CD4-positive, alpha-beta T cell (primary cell): ENCODE measurements at regions of chr1 and their contacts with region 1.

Region 1: DNA sequence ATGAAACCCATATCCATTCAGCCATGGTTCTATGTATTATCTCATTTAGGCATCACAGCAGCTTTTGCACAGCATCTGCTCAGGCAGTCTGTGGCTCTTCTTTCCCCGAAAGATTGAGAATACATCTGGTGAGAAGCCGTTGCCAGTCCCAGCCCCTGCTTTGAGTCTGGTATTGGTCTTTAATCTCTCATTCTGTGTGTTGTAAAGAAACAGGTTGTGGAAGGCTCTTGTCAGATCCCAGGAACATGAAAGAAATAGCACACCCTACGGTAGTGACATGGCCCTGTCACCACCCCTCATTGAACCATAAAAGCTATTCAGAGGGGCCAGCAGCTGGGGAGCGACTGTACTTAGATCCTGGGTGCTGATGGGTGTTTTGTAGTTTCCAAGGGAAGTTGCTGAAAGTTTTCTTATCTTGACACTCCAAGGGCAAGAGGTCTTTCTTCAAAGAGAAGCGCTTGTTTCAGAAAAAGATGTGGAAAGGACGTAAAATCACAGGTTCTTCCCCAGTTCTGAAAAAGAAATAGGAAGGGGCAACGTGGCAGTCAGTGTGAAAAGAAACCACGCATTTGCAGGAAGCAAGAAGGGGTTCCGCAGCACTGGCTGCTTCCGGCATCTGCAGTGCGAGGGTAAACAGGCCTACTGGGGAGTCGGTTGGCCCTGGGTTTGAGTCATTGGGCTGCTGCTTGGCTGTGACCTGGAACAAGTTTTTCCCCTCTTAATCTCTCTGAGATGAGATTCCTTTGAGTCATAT is 145.0 kb downstream of the DHRS3 start:
- DNase-seq: peak; percentile 25 to 84 (median 63)
- ATAC-seq: peak; percentile 75
- H3K4me3 ChIP-seq: peak overlapping the region; percentile 24
- H3K4me3 Mint-ChIP-seq: peak overlapping the region; percentile 55
- H3K27ac ChIP-seq: peak overlapping the region; percentile 59 to 81
- H3K27ac Mint-ChIP-seq: peak overlapping the region; percentile 88
- H3K4me1 ChIP-seq: peaks cover 47% of the 10 kb centered on the region
- H3K4me1 Mint-ChIP-seq: peaks cover 87% of the 10 kb centered on the region
- H3K27me3 ChIP-seq: no peaks in the 10 kb centered on the region
- H3K27me3 Mint-ChIP-seq: no peaks in the 10 kb centered on the region
- CTCF ChIP-seq: no peak

Region 2: GRCh38 chr1:12407050-12407961 is 65.7 kb before region 1 on chr1:
- CTCF ChIA-PET with region 1: no interaction called
- POLR2A ChIA-PET with region 1: interaction called, 3 read pairs
- intact Hi-C with region 1: loop called in 1 of 2 experiments (anchors 5 kb)
- DNase-seq: peak in 4 of 14 experiments; percentile 40 to 58 (median 57)
- ATAC-seq: peak; percentile 44
- H3K4me3 ChIP-seq: no peak overlapping the region
- H3K4me3 Mint-ChIP-seq: no peak overlapping the region
- H3K27ac ChIP-seq: no peak overlapping the region
- H3K27ac Mint-ChIP-seq: no peak overlapping the region
- H3K4me1 ChIP-seq: peaks cover 3% of the 10 kb centered on the region
- H3K4me1 Mint-ChIP-seq: peaks cover 40% of the 10 kb centered on the region
- H3K27me3 ChIP-seq: no peaks in the 10 kb centered on the region
- H3K27me3 Mint-ChIP-seq: no peaks in the 10 kb centered on the region
- CTCF ChIP-seq: peak; percentile 54

Region 3: DNA sequence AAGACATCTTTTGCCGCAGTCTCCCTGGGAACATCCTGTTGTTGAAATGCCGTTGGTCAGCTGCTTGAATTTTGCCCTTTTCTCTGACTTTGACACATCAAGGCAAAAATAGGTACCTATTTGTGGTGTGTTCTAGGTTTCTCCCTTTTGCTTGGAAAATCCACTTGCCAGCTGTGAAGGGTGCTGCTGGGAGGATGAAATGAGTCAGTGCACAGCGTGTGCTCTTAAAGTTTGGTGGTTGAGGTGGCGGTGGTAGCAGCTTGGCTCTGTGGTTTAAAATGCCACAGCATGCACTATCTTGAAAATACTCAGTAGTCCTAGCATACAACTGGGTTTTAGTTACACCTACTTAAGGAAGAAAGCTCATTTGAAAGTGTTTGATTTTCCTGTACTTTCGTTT is 38.8 kb before region 1 on chr1:
- CTCF ChIA-PET with region 1: interaction called, 3 read pairs
- POLR2A ChIA-PET with region 1: interaction called, 10 read pairs
- intact Hi-C with region 1: loop called in 1 of 2 experiments (anchors 2 kb)
- DNase-seq: peak in 12 of 14 experiments; percentile 11 to 82 (median 45)
- ATAC-seq: peak; percentile 78
- H3K4me3 ChIP-seq: no peak overlapping the region
- H3K4me3 Mint-ChIP-seq: peak overlapping the region; percentile 62
- H3K27ac ChIP-seq: peak overlapping the region; percentile 17 to 43
- H3K27ac Mint-ChIP-seq: peak overlapping the region; percentile 84
- H3K4me1 ChIP-seq: peaks cover 55% of the 10 kb centered on the region
- H3K4me1 Mint-ChIP-seq: peaks cover 61% of the 10 kb centered on the region
- H3K27me3 ChIP-seq: no peaks in the 10 kb centered on the region
- H3K27me3 Mint-ChIP-seq: no peaks in the 10 kb centered on the region
- CTCF ChIP-seq: no peak

Region 4: DNA sequence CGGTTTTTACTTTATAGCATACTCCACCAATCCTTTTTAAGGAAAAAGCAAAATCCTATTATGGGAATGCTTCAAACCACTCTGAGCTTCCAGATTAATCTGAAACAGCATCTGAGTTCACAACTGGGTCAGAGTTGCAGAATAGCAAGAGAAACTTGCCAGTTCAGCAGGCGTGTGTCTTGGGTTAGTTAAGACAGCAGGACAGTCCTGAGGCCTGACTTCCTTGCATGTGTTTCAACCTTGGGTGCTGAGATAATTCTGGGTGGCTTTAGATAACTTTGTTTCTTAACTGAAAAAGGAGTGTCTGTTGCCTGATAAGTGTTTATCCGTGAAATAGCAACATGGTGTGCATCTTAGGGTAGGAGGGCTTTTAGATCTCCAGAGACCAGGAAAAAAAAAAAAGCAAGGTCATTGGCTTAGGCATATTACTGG is 24.2 kb before region 1 on chr1:
- CTCF ChIA-PET with region 1: no interaction called
- POLR2A ChIA-PET with region 1: interaction called, 10 read pairs
- intact Hi-C with region 1: loop called in 1 of 2 experiments (anchors 2 kb)
- DNase-seq: peak in 1 of 14 experiments; percentile 13
- ATAC-seq: no peak
- H3K4me3 ChIP-seq: peak overlapping the region; percentile 19
- H3K4me3 Mint-ChIP-seq: no peak overlapping the region
- H3K27ac ChIP-seq: peak overlapping the region; percentile 33 to 64
- H3K27ac Mint-ChIP-seq: peak overlapping the region; percentile 85
- H3K4me1 ChIP-seq: peaks cover 59% of the 10 kb centered on the region
- H3K4me1 Mint-ChIP-seq: peaks cover 89% of the 10 kb centered on the region
- H3K27me3 ChIP-seq: no peaks in the 10 kb centered on the region
- H3K27me3 Mint-ChIP-seq: no peaks in the 10 kb centered on the region
- CTCF ChIP-seq: no peak

Region 5: GRCh38 chr1:12454406-12455391 is 18.3 kb before region 1 on chr1:
- CTCF ChIA-PET with region 1: interaction called, 3 read pairs
- POLR2A ChIA-PET with region 1: interaction called, 15 read pairs
- intact Hi-C with region 1: loop called (anchors 2 kb)
- DNase-seq: no peak
- ATAC-seq: no peak
- H3K4me3 ChIP-seq: no peak overlapping the region
- H3K4me3 Mint-ChIP-seq: peak overlapping the region; percentile 48
- H3K27ac ChIP-seq: no peak overlapping the region
- H3K27ac Mint-ChIP-seq: peak overlapping the region; percentile 86
- H3K4me1 ChIP-seq: peaks cover 75% of the 10 kb centered on the region
- H3K4me1 Mint-ChIP-seq: peaks cover 90% of the 10 kb centered on the region
- H3K27me3 ChIP-seq: no peaks in the 10 kb centered on the region
- H3K27me3 Mint-ChIP-seq: no peaks in the 10 kb centered on the region
- CTCF ChIP-seq: no peak

Region 6: DNA sequence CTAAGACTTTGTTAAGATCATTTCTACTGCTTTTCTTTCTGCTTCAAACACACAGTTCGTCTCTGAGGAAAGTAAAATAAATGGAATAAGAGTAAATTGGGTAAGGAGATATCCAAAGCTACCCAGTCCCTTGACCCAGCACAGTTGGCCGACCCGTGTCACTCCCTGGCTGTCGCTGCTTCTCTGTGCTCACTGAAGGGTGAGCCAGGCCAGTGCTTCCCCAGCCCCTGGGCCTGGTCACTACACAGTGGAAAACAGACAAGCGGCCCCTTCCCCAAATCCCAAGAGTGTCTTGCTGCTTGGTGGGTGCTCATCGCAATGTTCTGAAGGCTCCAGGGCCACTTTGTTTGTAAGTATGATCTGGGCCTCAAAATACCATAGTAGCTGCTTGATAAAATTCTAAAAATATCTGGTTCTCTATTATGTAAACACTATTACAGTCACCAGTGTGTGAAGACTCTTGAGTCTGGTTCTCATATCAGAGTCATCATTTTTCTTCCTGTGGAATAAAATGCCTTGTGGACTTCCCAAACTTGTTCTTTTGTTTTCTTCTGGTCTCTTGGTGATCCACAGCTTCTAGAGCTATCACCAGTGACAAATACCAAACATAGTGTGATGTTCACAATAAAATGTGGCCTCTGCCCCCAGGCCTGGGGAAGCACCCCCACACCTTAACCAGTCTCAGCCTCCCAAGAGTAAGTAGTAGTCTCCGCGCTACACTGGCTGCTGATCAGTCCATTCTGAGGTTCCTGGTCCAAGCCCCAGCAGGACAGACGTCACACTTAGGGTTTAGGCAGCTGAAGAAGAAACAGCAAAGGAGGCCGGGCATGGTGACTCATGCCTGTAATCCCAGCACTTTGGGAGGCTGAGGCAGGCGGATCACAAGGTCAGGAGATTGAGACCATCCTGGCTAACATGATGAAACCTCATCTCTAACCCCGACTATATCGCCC is 38.8 kb after region 1 on chr1:
- CTCF ChIA-PET with region 1: no interaction called
- POLR2A ChIA-PET with region 1: interaction called, 68 read pairs
- intact Hi-C with region 1: loop called in 1 of 2 experiments (anchors 2 kb)
- DNase-seq: no peak
- ATAC-seq: no peak
- H3K4me3 ChIP-seq: peak overlapping the region; percentile 46
- H3K4me3 Mint-ChIP-seq: peak overlapping the region; percentile 76
- H3K27ac ChIP-seq: peak overlapping the region; percentile 53 to 89
- H3K27ac Mint-ChIP-seq: peak overlapping the region; percentile 96
- H3K4me1 ChIP-seq: peaks cover 44% of the 10 kb centered on the region
- H3K4me1 Mint-ChIP-seq: peaks cover 61% of the 10 kb centered on the region
- H3K27me3 ChIP-seq: no peaks in the 10 kb centered on the region
- H3K27me3 Mint-ChIP-seq: no peaks in the 10 kb centered on the region
- CTCF ChIP-seq: no peak